Ascending aorta (tissue), 2 donors: ENCODE measurements at regions of chr2 and their contacts with region 1.

Region 1: GRCh38 chr2:84925724-84926376 is 20.4 kb downstream of the TMSB10 start:
- DNase-seq: peak; percentile 90 to 99
- H3K4me3 ChIP-seq: peak overlapping the region; percentile 49 to 60
- H3K27ac ChIP-seq: no peak overlapping the region
- H3K4me1 ChIP-seq: peaks cover 0 to 13% of the 10 kb centered on the region in 2 donors
- H3K27me3 ChIP-seq: no peaks in the 10 kb centered on the region
- CTCF ChIP-seq: peak; percentile 93 to 96 (median 95)

Region 2: DNA sequence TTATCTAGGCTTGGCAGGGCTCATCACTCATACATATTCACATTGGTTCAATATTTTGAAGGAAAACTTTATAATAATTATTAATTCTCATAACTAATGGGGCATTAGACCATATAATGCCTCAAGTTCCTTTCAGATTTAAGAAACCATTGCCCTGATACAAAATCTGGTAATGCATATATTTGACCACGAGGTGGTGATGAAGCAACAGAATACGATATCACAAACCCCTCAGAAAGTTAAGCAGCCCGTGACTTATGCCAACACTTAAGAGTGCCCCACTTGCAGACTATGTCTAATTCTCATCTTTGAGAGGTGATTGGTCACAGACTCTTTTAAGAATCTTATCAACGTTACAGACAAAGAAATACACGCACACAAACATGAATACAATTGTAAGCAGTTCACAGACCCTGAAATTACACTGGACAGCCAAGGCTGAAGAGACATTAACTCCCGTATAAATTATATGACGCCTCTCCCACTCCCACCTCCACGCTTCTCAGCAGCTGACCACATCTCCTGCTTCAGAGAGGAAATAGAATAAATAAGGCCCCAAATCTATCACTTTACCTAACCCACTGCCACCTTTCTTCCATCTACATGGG is 430.2 kb before region 1 on chr2:
- intact Hi-C with region 1: loop called (anchors 2 kb)
- DNase-seq: no peak
- H3K4me3 ChIP-seq: no peak overlapping the region
- H3K27ac ChIP-seq: no peak overlapping the region
- H3K4me1 ChIP-seq: no peaks in the 10 kb centered on the region
- H3K27me3 ChIP-seq: no peaks in the 10 kb centered on the region
- CTCF ChIP-seq: peak; percentile 39 to 60 (median 47)

Region 3: DNA sequence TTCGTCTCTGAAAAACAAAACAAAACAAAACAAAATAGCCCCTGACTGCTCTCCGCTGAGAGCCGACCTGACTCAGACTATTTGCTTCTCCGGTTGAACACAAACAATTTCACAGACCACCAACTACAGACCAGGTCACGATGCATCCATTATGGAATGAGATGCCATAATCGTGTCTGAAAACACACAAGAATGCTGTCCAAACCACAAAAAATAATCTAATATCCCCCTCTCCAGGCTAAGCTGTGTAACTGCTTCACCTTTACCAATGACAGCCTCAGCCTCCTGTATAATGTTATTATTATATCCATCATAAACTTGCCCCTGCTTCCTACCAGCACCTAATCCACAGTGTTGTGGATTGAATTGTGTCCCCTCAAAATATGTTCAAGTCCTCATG is 294.8 kb before region 1 on chr2:
- intact Hi-C with region 1: no loop called
- DNase-seq: no peak
- H3K4me3 ChIP-seq: no peak overlapping the region
- H3K27ac ChIP-seq: no peak overlapping the region
- H3K4me1 ChIP-seq: no peaks in the 10 kb centered on the region
- H3K27me3 ChIP-seq: no peaks in the 10 kb centered on the region
- CTCF ChIP-seq: peak in 2 of 3 experiments; percentile 17 to 18

Region 4: DNA sequence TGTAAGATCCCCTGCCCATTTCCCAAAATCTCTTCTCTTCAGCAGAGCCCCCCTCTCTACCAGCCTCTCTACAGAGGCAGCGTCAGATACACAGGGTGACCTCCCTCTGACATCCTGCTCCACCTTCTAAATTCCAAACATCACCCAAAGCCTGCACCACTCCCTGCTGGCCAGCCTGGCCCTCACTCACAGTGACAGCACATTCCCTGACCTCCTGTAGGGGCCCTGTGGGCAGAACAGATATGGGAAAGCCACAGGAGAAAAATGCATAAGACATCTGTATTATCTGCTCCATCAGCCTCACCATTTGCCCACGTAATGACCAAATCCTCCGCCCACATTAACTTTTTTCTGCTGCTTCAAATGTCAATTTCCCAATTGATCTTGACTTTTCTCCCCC is 85.5 kb before region 1 on chr2:
- intact Hi-C with region 1: no loop called
- DNase-seq: no peak
- H3K4me3 ChIP-seq: no peak overlapping the region
- H3K27ac ChIP-seq: no peak overlapping the region
- H3K4me1 ChIP-seq: no peaks in the 10 kb centered on the region
- H3K27me3 ChIP-seq: no peaks in the 10 kb centered on the region
- CTCF ChIP-seq: no peak

Region 5: GRCh38 chr2:84881581-84882414 is 44.1 kb before region 1 on chr2:
- intact Hi-C with region 1: loop called (anchors 1 kb)
- DNase-seq: peak; percentile 22 to 88
- H3K4me3 ChIP-seq: peak overlapping the region; percentile 59 to 75
- H3K27ac ChIP-seq: no peak overlapping the region
- H3K4me1 ChIP-seq: peaks cover 2 to 25% of the 10 kb centered on the region in 2 donors
- H3K27me3 ChIP-seq: no peaks in the 10 kb centered on the region
- CTCF ChIP-seq: peak; percentile 52 to 67 (median 61)

Region 6: GRCh38 chr2:84905181-84906107 is 20.4 kb before region 1 on chr2 and contains the start of gene TMSB10:
- intact Hi-C with region 1: loop called (anchors 1 kb)
- DNase-seq: peak in 1 of 2 donors; percentile 92
- H3K4me3 ChIP-seq: peak within 1 kb of the TSS; percentile 85 to 98
- H3K27ac ChIP-seq: peak within 1 kb of the TSS; percentile 90 to 94
- H3K4me1 ChIP-seq: peaks cover 0 to 7% of the 10 kb centered on the region in 2 donors
- H3K27me3 ChIP-seq: no peaks in the 10 kb centered on the region
- CTCF ChIP-seq: peak in 1 of 3 experiments; percentile 5
- total RNA-seq, gene TMSB10: 5,452 TPM

Region 7: GRCh38 chr2:84959045-84959493 is 33.2 kb after region 1 on chr2:
- intact Hi-C with region 1: no loop called
- DNase-seq: no peak
- H3K4me3 ChIP-seq: no peak overlapping the region
- H3K27ac ChIP-seq: no peak overlapping the region
- H3K4me1 ChIP-seq: peaks cover 0 to 5% of the 10 kb centered on the region in 2 donors
- H3K27me3 ChIP-seq: no peaks in the 10 kb centered on the region
- CTCF ChIP-seq: no peak

Region 8: GRCh38 chr2:84970868-84971509 is 45.1 kb after region 1 on chr2 and contains the start of gene KCMF1:
- intact Hi-C with region 1: loop called (anchors 5 kb)
- DNase-seq: peak in 1 of 2 donors; percentile 77
- H3K4me3 ChIP-seq: peak within 1 kb of the TSS; percentile 90 to 99
- H3K27ac ChIP-seq: peak within 1 kb of the TSS; percentile 94 to 99
- H3K4me1 ChIP-seq: peaks cover 9 to 22% of the 10 kb centered on the region in 2 donors
- H3K27me3 ChIP-seq: no peaks in the 10 kb centered on the region
- CTCF ChIP-seq: no peak
- total RNA-seq, gene KCMF1: 14.4 TPM

Region 9: DNA sequence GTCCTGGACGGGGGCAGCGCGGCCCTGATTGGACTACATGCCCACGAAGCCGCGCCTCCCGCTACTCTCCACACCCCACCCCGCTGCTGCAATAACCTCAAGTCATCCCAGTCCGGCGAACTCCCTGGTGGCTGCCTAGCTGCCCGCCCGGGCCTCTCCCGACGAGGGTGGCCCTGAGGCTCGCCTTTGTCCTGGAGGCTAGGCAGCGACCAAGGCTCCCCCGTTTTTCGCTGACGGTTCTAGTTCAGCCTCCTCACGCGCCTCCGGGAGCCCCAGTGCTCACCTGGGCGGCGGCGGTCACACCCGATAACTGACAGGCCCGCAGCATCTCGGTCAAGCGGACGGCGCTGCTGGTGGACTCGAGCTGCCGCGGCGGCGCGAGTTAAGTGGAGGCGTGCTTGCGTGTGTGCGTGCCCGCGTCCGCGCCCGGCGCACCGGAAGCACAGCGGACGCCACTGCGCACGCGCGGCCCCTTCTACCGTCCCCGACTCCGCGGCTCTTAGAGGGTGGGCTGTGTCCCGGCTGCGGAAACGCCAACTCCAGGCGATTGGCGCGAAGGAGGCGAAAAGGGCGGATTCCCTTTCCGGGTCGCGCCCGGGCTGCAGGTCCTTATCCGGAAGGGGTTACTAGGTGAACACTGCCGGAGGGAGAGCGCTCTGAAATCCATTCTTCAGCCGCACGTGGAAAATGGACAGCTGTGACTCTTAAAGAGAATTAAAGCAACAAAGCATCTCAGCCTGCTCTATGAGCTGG is 1269.4 kb after region 1 on chr2 and contains the start of gene IMMT:
- intact Hi-C with region 1: no loop called
- DNase-seq: peak; percentile 67 to 95
- H3K4me3 ChIP-seq: peak within 1 kb of the TSS; percentile 89 to 91
- H3K27ac ChIP-seq: peak within 1 kb of the TSS; percentile 99
- H3K4me1 ChIP-seq: peaks cover 6 to 41% of the 10 kb centered on the region in 2 donors
- H3K27me3 ChIP-seq: no peaks in the 10 kb centered on the region
- CTCF ChIP-seq: no peak
- total RNA-seq, gene IMMT: 97.1 TPM